ENCODE measurements at regions of chr17 and their contacts with region 1.

Region 1: GRCh38 chr17:16521070-16521727 is 29.2 kb upstream of the LRRC75A start:
- DNase-seq: peak; percentile 87
- H3K4me3 ChIP-seq: no peak overlapping the region
- H3K27ac ChIP-seq: no peak overlapping the region
- H3K4me1 ChIP-seq: peaks cover 3% of the 10 kb centered on the region
- CTCF ChIP-seq: peak; percentile 97

Region 2: GRCh38 chr17:16363749-16364536 is 157.3 kb before region 1 on chr17:
- CTCF ChIA-PET with region 1: interaction called, 5 read pairs
- POLR2A ChIA-PET with region 1: no interaction called
- intact Hi-C with region 1: loop called (anchors 1 kb)
- DNase-seq: peak; percentile 87
- H3K4me3 ChIP-seq: no peak overlapping the region
- H3K27ac ChIP-seq: no peak overlapping the region
- H3K4me1 ChIP-seq: peaks cover 3% of the 10 kb centered on the region
- CTCF ChIP-seq: peak; percentile 99

Region 3: DNA sequence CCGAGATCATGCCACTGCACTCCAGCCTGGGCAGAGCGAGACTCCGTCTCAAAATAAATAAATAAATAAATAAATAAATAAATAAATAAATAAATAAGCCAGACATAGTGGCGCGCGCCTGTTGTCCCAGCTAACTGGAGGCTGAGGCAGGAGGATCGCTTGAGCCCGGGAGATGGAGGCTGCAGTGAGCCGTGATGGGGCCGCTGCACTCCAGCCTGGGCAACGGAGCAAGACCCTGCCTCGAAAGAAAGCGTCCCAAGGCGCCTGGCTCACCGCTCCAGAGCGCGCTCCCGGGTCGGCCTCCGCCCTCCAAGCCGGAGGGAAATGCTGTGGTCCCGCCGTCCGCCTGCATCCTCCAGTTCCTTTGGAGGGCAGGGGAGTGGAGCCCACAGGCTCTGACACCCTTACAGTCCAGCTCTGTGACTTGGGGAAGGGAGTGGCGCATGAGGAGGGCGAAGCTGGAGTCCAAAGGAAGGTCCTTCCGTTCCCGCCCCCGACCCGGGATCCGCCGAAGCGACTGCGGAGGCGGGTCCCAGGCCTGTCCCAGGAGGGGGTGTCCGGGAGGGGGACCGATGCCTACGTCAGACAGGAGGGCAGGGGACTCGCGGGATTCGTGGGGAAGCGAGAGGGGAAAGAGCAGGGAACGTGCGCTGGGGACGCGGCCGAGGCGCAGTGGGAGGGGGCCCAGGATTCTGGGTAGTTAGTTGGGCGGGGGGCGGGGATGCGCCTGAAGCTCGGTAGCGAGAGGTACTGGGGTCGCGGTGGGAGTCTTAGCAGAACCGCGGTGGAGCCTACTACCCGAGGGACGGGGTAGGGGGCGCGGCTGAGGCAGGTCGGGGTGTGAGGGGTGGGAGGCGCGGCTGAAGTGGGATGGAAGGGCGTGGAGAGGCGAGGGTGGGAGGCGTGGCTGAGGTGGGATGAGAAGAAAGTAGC is 114.2 kb before region 1 on chr17:
- CTCF ChIA-PET with region 1: interaction called, 17 read pairs
- POLR2A ChIA-PET with region 1: no interaction called
- intact Hi-C with region 1: no loop called
- DNase-seq: no peak
- H3K4me3 ChIP-seq: peak overlapping the region; percentile 25
- H3K27ac ChIP-seq: no peak overlapping the region
- H3K4me1 ChIP-seq: peaks cover 26% of the 10 kb centered on the region
- CTCF ChIP-seq: no peak

Region 4: GRCh38 chr17:16428098-16428882 is 92.9 kb before region 1 on chr17:
- CTCF ChIA-PET with region 1: interaction called, 3 read pairs
- POLR2A ChIA-PET with region 1: no interaction called
- intact Hi-C with region 1: loop called (anchors 1 kb)
- DNase-seq: peak; percentile 72
- H3K4me3 ChIP-seq: no peak overlapping the region
- H3K27ac ChIP-seq: no peak overlapping the region
- H3K4me1 ChIP-seq: no peaks in the 10 kb centered on the region
- CTCF ChIP-seq: peak; percentile 81

Region 5: GRCh38 chr17:16453493-16453851 is 67.7 kb before region 1 on chr17:
- CTCF ChIA-PET with region 1: interaction called, 4 read pairs
- POLR2A ChIA-PET with region 1: no interaction called
- intact Hi-C with region 1: loop called (anchors 1 kb)
- DNase-seq: no peak
- H3K4me3 ChIP-seq: no peak overlapping the region
- H3K27ac ChIP-seq: no peak overlapping the region
- H3K4me1 ChIP-seq: no peaks in the 10 kb centered on the region
- CTCF ChIP-seq: no peak; the same call in 1 of the 2 replicates

Region 6: DNA sequence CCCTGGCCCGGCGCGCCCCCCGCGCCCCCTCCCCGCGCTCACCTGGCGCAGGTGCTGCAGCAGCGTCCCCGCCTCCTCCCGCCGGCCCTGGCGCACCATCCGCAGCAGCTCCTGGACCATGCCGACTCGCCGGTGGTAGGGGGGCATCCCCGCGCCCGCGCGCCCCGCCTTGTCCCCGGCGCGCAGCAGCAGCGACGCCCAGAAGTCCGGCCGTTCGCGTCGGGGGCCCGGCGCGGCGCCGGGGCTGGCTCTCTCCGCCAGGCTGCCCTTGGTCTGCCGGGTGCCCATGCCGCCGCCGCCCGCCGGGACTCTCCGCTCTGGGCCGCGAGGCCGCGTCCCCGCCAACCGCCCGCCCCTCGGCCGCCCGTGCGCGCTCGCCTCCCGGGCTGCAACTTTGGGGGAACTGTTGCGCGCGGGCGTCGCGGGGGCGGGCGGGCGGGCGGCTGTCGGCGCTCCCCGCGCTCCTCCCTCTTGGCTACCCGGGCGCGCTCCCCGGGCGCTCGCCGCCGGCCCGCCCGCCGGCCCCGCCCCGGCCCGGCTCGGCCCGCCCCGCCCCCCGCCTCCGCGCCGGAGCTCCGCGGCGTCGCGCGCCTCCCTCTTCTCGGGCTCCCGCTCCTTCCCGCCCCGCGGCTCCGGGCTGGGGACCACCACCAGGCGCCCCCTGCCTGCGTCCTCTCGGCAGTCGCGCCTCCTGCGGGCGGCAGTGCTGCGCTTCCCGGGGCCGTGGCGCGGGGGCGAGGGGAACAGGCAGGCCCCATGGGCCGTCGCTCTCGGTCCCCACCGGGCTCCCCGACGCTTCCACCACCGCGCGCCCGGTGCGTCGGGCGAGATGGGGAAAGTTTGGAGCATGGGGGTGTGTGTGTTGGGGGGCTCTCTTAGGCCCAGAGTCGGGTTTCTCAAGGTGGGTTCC is 29.2 kb before region 1 on chr17 and contains the start of gene LRRC75A:
- CTCF ChIA-PET with region 1: no interaction called
- POLR2A ChIA-PET with region 1: no interaction called
- intact Hi-C with region 1: no loop called
- DNase-seq: no peak
- H3K4me3 ChIP-seq: no peak within 1 kb of the TSS
- H3K27ac ChIP-seq: no peak within 1 kb of the TSS
- H3K4me1 ChIP-seq: no peaks in the 10 kb centered on the region
- CTCF ChIP-seq: 0 out of 2 replicates have a peak, but pooled peaks have one; percentile 20
- total RNA-seq, gene LRRC75A: not detected in 2 replicates